Panc1 (cell line): ENCODE measurements at regions of chr18 and their contacts with region 1.

Region 1: DNA sequence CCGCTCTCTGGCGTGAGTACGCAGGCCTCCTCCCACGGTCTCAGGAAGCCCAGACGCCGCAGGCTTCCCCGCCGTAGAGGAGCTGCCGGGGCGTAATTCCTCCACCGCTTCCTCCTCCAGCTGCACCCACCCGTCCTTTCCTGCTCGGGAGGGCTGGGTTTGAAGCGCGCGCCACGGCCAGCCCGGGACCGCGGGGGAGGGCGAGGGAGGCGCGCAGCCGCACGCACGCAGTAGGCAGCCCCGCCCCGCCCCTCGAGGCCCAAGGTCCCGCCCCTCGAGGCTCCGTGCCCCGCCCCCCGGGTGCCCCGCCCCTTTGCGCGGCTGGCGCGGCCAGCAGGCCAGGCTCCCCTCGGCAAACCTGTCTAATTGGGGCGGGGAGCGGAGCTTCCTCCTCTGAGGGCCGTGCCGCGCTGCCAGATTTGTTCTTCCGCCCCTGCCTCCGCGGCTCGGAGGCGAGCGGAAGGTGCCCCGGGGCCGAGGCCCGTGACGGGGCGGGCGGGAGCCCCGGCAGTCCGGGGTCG is at the start of gene MALT1:
- DNase-seq: no peak
- ATAC-seq: peak; percentile 91
- H3K4me3 ChIP-seq: peak within 1 kb of the TSS; percentile 59 to 80
- H3K27ac ChIP-seq: peak within 1 kb of the TSS; percentile 85
- H3K4me1 ChIP-seq: peaks cover 27% of the 10 kb centered on the region
- H3K27me3 ChIP-seq: no peaks in the 10 kb centered on the region
- CTCF ChIP-seq: no peak
- total RNA-seq, gene MALT1: 34.0 TPM

Region 2: GRCh38 chr18:58788971-58789875 is 118.1 kb after region 1 on chr18:
- CTCF ChIA-PET with region 1: no interaction called
- POLR2A ChIA-PET with region 1: interaction called, 14 read pairs
- in situ Hi-C with region 1: no loop called
- intact Hi-C with region 1: no loop called
- DNase-seq: no peak
- ATAC-seq: peak; percentile 62
- H3K4me3 ChIP-seq: no peak overlapping the region
- H3K27ac ChIP-seq: peak overlapping the region; percentile 96
- H3K4me1 ChIP-seq: peaks cover 43% of the 10 kb centered on the region
- H3K27me3 ChIP-seq: no peaks in the 10 kb centered on the region
- CTCF ChIP-seq: no peak